Right ventricle myocardium inferior (tissue), 1 donor: ENCODE measurements at regions of chr19 and their contacts with region 1.

Region 1: GRCh38 chr19:41456342-41456918 is 13.5 kb downstream of the ERICH4 start:
- DNase-seq: no peak
- ATAC-seq: peak; percentile 26

Region 2: DNA sequence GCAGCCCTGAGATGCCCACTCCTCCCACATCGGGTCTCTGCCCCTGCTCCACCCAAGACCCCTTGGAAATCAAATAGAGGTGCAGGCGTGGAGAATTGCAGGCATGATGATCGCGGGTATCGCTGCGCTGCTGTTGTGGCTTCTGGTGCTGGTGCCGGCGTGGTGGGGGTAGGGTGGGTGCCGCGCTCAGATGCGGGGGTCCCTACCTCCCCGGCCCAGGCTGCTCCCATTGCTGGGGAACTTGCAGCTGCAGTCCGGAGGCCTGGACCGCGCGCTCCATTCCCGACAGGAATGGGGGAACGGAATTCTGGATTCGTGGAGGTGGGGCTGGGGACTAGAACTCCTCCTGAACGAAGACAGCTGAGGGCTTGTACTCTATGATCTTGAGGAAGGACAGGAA is 321.8 kb before region 1 on chr19:
- intact Hi-C with region 1: no loop called
- DNase-seq: no peak
- ATAC-seq: no peak

Region 3: DNA sequence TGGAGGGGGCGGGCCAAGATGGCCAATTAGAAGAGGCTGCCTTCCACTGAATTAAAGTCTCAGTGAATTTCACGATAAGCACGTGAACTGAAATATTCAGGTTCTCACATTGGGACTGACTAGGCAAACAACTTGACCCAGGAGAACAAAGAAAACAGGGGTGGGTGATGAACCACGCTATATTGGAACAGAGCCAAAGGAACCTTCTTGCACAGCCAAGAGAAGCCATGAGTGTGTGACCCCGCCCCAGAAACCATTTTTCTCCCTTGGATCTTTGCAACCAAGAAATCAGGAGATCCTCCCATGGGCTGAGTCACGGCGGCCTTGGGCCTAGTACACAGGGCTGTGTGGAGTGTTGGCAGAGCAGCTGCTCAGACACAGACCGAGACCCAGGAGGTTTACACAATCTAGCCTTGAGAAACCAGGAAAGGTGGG is 23.3 kb after region 1 on chr19:
- intact Hi-C with region 1: loop called (anchors 1 kb)
- DNase-seq: no peak
- ATAC-seq: peak; percentile 36

Region 4: GRCh38 chr19:41531438-41532311 is 75.2 kb after region 1 on chr19:
- intact Hi-C with region 1: no loop called
- DNase-seq: peak; percentile 87
- ATAC-seq: peak; percentile 88

Region 5: GRCh38 chr19:41785653-41786052 is 329.2 kb after region 1 on chr19:
- intact Hi-C with region 1: no loop called
- DNase-seq: no peak
- ATAC-seq: no peak

Region 6: GRCh38 chr19:41870401-41870873 is 414.0 kb after region 1 on chr19:
- intact Hi-C with region 1: no loop called
- DNase-seq: peak; percentile 15
- ATAC-seq: no peak